RWPE1 (cell line): ENCODE measurements at regions of chr15 and their contacts with region 1.

Region 1: GRCh38 chr15:58227706-58228543 is 89.7 kb downstream of the AQP9 start:
- DNase-seq: peak; percentile 70
- H3K27ac ChIP-seq: no peak overlapping the region
- CTCF ChIP-seq: peak; percentile 96

Region 2: DNA sequence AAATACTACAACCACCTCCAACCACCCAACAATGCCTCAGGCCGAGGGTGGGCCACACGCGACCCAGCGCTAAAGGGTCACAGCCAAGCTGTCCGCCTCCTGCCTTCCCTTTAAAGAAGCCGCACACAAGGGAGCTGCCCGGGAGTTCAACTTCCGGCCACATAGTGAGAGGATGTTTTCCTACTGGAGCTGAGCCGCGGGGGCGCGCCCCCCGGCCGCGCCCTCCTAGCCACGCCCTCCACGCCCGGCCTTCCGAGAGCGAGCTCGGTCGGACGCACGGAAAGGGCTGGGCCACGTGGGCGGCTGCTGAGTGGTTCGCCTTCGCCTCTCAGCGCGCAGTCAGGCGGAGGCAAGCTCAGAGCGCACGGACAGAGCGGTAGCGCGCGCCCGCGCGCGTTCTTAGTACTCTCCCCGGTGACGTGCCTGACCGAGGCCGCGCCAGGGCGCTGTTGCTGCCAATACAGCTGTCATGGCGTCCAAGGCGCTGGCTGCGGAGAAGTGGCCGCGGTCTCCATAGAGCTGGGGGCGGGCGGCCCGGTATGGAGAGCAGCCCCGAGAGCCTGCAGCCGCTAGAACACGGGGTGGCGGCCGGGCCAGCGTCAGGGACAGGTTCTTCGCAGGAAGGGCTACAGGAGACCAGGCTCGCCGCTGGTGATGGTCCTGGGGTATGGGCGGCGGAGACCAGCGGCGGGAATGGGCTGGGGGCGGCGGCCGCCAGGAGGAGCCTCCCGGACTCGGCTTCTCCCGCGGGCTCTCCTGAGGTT is 543.1 kb after region 1 on chr15 and contains the start of gene MINDY2:
- CTCF ChIA-PET with region 1: interaction called, 10 read pairs
- POLR2A ChIA-PET with region 1: interaction called, 4 read pairs
- DNase-seq: peak; percentile 94
- H3K27ac ChIP-seq: peak within 1 kb of the TSS; percentile 96
- CTCF ChIP-seq: peak; percentile 32; the same call in 1 of the 2 replicates